HepG2 (cell line): ENCODE measurements at regions of chr12 and their contacts with region 1.

Region 1: GRCh38 chr12:54958048-54958658 is 26.4 kb downstream of the TESPA1 start:
- DNase-seq: peak; percentile 39
- ATAC-seq: peak; percentile 57
- H3K4me3 ChIP-seq: no peak overlapping the region
- H3K27ac ChIP-seq: no peak overlapping the region
- H3K4me1 ChIP-seq: no peaks in the 10 kb centered on the region
- H3K27me3 ChIP-seq: peaks cover 1 to 12% of the 10 kb centered on the region in 2 experiments; a peak in 1 of 5 replicates
- CTCF ChIP-seq: peak; percentile 76
- EP300 ChIP-seq: no peak
- POLR2A ChIP-seq: no peak
- RAD21 ChIP-seq: peak; percentile 67; the same call in 1 of the 2 replicates

Region 2: GRCh38 chr12:54701940-54702592 is 256.1 kb before region 1 on chr12:
- CTCF ChIA-PET with region 1: interaction called, 23 read pairs
- POLR2A ChIA-PET with region 1: no interaction called
- in situ Hi-C with region 1: no loop called
- intact Hi-C with region 1: loop called (anchors 2 kb)
- DNase-seq: peak; percentile 36
- ATAC-seq: peak; percentile 50; the same call in 2 of the 3 replicates
- H3K4me3 ChIP-seq: no peak overlapping the region
- H3K27ac ChIP-seq: no peak overlapping the region
- H3K4me1 ChIP-seq: no peaks in the 10 kb centered on the region
- H3K27me3 ChIP-seq: no peaks in the 10 kb centered on the region; a peak in 1 of 5 replicates
- CTCF ChIP-seq: peak; percentile 58
- EP300 ChIP-seq: no peak
- POLR2A ChIP-seq: no peak
- RAD21 ChIP-seq: peak; percentile 27; the same call in 1 of the 2 replicates

Region 3: DNA sequence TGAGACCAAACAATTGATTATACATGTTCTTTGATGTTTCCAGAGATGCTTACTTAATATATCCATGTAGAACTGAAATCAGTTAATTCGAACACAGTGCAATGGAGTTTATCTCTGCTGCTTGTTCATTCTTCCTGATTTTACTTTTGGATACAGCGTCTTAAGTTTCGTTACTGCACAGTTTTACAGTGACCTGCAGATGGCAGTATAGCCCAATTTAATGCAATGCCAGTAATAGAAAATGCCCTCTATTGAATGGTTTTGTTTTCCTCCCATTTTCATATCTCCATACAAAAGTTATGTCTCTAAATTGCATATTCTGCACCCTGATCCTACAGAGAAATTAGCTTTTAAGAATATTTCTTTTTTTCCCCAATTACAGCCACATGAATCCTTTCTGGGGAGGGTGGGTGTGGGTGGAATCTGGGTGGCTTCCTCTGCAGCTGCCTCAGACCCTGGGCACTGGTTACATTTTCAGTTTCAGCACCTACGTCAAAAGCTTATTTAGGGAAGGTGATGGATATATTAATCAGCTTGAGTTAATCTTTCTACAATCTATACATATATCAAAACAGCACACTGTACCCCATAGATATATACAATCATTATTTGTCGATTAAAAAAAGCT is 208.8 kb before region 1 on chr12:
- CTCF ChIA-PET with region 1: interaction called, 22 read pairs
- POLR2A ChIA-PET with region 1: no interaction called
- in situ Hi-C with region 1: loop called (anchors 10 kb)
- intact Hi-C with region 1: loop called (anchors 1 kb)
- DNase-seq: peak; percentile 26
- ATAC-seq: no peak
- H3K4me3 ChIP-seq: no peak overlapping the region
- H3K27ac ChIP-seq: no peak overlapping the region
- H3K4me1 ChIP-seq: no peaks in the 10 kb centered on the region
- H3K27me3 ChIP-seq: no peaks in the 10 kb centered on the region
- CTCF ChIP-seq: peak; percentile 73
- EP300 ChIP-seq: no peak
- POLR2A ChIP-seq: no peak
- RAD21 ChIP-seq: peak; percentile 55; the same call in 1 of the 2 replicates

Region 4: DNA sequence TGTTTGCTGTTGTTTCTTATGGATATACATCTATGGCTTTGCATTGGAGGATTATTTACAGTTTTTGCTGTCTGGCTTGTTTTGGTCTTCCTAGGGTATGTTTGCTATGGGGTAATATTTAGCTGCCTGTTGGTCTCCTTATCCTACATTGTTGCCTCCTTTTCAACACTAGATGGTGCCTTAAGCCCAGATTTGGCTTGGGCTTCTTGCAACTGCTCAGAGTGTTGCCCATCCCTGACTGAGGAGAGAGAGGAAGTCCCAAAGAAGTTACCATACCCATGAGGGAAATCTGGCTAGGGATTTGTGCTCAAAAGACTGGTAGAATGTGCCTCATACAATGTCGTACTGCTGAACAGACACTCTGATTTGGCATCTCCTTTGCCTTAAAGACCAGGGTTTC is 198.4 kb before region 1 on chr12:
- CTCF ChIA-PET with region 1: interaction called, 5 read pairs
- POLR2A ChIA-PET with region 1: no interaction called
- in situ Hi-C with region 1: loop called (anchors 10 kb)
- intact Hi-C with region 1: loop called (anchors 1 kb)
- DNase-seq: peak; percentile 38
- ATAC-seq: peak; percentile 74
- H3K4me3 ChIP-seq: no peak overlapping the region
- H3K27ac ChIP-seq: no peak overlapping the region
- H3K4me1 ChIP-seq: no peaks in the 10 kb centered on the region
- H3K27me3 ChIP-seq: no peaks in the 10 kb centered on the region
- CTCF ChIP-seq: peak; percentile 60
- EP300 ChIP-seq: no peak
- POLR2A ChIP-seq: no peak
- RAD21 ChIP-seq: peak; percentile 34; the same call in 1 of the 2 replicates

Region 5: DNA sequence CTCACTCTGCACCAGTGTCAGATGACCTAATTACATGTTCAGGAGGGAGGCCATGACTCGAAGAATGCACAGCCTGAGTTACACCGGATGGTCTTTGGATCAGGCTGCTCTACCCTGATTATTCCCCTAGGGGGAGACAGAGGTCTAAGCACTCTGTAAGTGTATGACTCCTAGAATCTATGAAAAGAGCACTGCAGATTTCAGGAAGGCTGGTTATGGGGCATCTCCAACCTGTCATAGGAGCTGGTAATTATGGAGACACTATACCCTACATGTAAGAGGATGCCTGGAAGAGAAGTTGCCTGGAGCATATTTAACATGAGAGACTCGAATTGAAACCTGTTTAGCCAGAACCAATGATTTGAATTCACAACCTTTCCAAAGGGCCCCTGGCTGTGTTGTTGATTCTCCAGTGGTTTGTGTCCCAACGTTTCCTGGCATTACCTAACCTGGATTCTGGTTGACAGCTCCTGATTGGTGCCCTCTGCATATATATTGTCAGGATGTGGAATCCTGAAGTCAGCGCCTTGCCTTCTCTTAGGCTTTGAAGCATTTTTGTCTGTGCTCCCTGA is 104.1 kb before region 1 on chr12 and contains the start of gene MUCL1:
- CTCF ChIA-PET with region 1: interaction called, 22 read pairs
- POLR2A ChIA-PET with region 1: no interaction called
- in situ Hi-C with region 1: loop called (anchors 5 kb)
- intact Hi-C with region 1: loop called (anchors 1 kb)
- DNase-seq: peak; percentile 48
- ATAC-seq: peak; percentile 94
- H3K4me3 ChIP-seq: no peak within 1 kb of the TSS
- H3K27ac ChIP-seq: no peak within 1 kb of the TSS
- H3K4me1 ChIP-seq: no peaks in the 10 kb centered on the region
- H3K27me3 ChIP-seq: peaks cover 0 to 6% of the 10 kb centered on the region in 2 experiments; a peak in 1 of 5 replicates
- CTCF ChIP-seq: peak; percentile 75
- EP300 ChIP-seq: no peak
- POLR2A ChIP-seq: no peak
- RAD21 ChIP-seq: 0 out of 2 replicates have a peak, but pooled peaks have one; percentile 41
- total RNA-seq, gene MUCL1: not detected in 2 replicates

Region 6: DNA sequence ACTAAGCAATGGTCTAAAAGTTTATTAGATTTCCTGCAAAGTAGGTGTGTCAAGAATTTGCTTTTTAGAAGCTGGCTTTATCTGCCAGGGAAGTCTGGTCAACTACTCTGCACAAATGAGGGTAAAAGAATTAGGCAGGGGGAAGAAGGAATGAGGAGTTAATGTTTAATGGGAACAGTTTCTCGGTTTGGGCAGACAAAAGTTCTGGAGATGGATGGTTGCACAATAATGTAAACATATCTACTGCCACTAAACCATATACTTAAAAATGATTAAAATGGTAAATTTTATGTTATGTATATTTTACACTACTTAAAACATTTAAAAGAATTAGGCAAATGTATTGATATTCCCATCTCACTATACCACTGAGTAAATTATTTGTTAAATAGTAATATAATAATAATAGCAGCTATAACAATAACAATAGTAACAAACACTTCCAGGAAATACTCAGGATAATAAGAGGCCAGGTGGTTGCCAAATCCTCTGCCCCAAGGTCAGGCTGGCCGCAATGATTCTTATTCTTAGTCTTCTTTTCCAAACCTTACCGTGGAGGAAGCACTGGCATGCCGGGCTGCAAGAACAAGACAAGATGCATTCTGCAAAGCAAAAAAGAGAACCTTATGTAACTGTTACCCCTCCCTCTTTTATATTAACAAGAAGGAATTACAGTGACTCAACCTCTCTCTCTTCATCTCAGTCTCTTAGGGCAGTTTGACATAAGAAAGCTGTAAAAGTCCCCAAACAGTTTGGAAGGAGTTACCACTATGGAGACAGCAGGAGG is 1328.1 kb after region 1 on chr12:
- CTCF ChIA-PET with region 1: no interaction called
- POLR2A ChIA-PET with region 1: no interaction called
- in situ Hi-C with region 1: no loop called
- intact Hi-C with region 1: no loop called
- DNase-seq: no peak
- ATAC-seq: no peak
- H3K4me3 ChIP-seq: no peak overlapping the region
- H3K27ac ChIP-seq: peak overlapping the region; percentile 30
- H3K4me1 ChIP-seq: peaks cover 53% of the 10 kb centered on the region
- H3K27me3 ChIP-seq: no peaks in the 10 kb centered on the region
- CTCF ChIP-seq: no peak
- EP300 ChIP-seq: no peak
- POLR2A ChIP-seq: no peak
- RAD21 ChIP-seq: no peak